CD4-positive, alpha-beta T cell (primary cell): ENCODE measurements at regions of chr3 and their contacts with region 1.

Region 1: GRCh38 chr3:50163572-50164455 is 8.7 kb downstream of the SEMA3F start:
- DNase-seq: no peak
- ATAC-seq: no peak
- H3K4me3 ChIP-seq: no peak overlapping the region
- H3K4me3 Mint-ChIP-seq: no peak overlapping the region
- H3K27ac ChIP-seq: no peak overlapping the region
- H3K27ac Mint-ChIP-seq: no peak overlapping the region
- H3K4me1 ChIP-seq: no peaks in the 10 kb centered on the region
- H3K4me1 Mint-ChIP-seq: no peaks in the 10 kb centered on the region
- H3K27me3 ChIP-seq: no peaks in the 10 kb centered on the region
- H3K27me3 Mint-ChIP-seq: peaks cover 3% of the 10 kb centered on the region
- CTCF ChIP-seq: no peak

Region 2: DNA sequence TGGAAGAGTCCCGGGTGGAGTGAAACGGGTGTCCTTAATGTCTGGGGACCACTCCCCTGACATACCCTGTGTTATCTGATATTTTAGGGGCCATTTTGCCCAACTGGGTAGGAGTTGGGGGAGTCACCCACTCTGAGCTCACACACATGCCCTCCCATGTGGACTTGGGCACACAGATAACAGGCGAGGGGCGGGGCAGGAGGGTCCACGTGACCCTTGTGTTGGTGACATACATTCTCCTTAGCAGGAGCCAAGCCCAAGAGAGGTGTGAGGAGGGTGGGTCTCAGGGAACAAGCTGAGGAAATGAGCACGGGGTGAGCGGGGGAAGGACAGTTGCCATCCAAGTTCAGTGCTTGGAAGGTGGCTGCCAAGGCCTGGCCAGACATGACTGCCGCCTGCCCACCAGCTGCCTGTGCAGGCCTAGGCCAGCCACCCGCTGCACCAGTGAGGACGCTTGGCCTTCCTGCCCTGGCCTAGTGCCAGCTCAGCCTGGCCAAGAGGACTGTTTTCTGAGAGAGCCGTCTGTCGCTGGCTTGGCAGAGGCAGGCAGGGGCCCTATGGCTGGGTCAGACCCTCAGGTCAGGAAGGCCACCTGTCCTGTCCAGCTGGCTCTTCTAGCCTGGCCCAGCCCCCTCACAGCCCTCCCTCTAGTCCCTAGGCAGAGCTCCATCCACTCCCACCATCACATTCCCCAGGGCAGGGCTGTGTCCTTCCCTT is 226.9 kb after region 1 on chr3:
- CTCF ChIA-PET with region 1: no interaction called
- POLR2A ChIA-PET with region 1: no interaction called
- intact Hi-C with region 1: loop called in 1 of 2 experiments (anchors 10 kb)
- DNase-seq: no peak
- ATAC-seq: no peak
- H3K4me3 ChIP-seq: no peak overlapping the region
- H3K4me3 Mint-ChIP-seq: no peak overlapping the region
- H3K27ac ChIP-seq: no peak overlapping the region
- H3K27ac Mint-ChIP-seq: no peak overlapping the region
- H3K4me1 ChIP-seq: no peaks in the 10 kb centered on the region
- H3K4me1 Mint-ChIP-seq: no peaks in the 10 kb centered on the region
- H3K27me3 ChIP-seq: no peaks in the 10 kb centered on the region
- H3K27me3 Mint-ChIP-seq: no peaks in the 10 kb centered on the region
- CTCF ChIP-seq: no peak